ENCODE measurements at regions of chr6 and their contacts with region 1.

Region 1: GRCh38 chr6:70706491-70707123 is 38.9 kb downstream of the SMAP1 start:
- DNase-seq: no peak
- H3K4me3 Mint-ChIP-seq: no peak overlapping the region
- H3K27ac Mint-ChIP-seq: no peak overlapping the region
- H3K4me1 Mint-ChIP-seq: peaks cover 41% of the 10 kb centered on the region
- H3K27me3 Mint-ChIP-seq: no peaks in the 10 kb centered on the region

Region 2: DNA sequence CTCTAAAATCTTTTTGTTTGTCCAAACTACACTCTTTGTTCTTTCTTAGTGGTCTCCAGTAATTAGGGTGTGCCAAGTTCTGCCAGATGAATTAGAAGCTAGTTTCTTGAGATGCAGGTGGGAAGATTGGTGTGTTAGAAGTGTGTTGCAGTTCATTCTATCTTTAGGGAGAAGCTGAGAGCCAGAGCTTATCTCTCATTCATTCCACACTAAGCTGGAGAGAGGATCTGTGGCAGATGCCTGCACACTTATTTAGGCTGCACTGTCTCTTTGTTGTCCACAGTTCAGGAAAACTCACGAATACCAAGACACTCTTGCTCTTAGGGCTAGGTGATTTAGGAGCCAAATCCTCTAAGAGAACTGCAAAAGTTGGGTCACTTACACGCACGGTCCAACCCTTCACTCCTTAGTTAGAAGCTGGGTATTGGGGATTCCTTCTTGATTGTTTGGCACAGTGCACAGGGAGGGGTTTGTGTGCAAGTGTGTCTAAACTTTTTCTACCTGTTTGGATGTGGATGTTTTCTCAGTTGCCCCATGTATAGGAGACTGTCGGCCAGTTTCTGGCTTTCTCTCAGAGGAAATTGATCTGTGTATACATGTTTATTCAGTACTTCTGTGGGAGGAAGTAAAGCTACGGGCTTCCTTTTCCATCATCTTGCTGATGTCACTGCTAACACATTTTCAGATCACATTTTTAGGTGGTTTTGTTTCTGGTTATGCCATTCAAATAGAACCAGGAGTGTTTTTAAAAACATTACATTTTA is 10.6 kb after region 1 on chr6:
- CTCF ChIA-PET with region 1: interaction called, 11 read pairs
- intact Hi-C with region 1: no loop called
- DNase-seq: peak; percentile 22
- H3K4me3 Mint-ChIP-seq: no peak overlapping the region
- H3K27ac Mint-ChIP-seq: peak overlapping the region; percentile 29
- H3K4me1 Mint-ChIP-seq: peaks cover 44% of the 10 kb centered on the region
- H3K27me3 Mint-ChIP-seq: no peaks in the 10 kb centered on the region

Region 3: DNA sequence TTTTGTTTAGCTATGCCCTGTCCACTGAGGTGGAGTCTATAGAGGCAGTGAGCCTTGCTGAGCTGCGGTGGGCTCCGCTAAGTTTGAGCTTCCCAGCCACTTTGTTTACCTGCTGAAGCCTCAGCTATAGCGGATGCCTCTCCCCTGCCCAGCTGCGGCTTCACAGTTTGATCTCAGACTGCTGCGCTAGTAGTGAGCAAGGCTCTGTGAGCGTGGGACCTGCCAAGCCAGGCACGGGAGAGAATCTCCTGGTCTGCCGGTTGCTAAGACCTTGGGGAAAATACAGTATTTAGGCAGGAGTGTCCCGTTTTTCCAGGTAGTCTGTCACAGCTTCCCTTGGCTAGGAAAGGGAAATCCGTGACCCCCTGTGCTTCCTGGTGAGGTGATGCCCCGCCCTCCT is 99.5 kb after region 1 on chr6:
- CTCF ChIA-PET with region 1: interaction called, 11 read pairs
- intact Hi-C with region 1: no loop called
- DNase-seq: no peak
- H3K4me3 Mint-ChIP-seq: no peak overlapping the region
- H3K27ac Mint-ChIP-seq: no peak overlapping the region
- H3K4me1 Mint-ChIP-seq: peaks cover 10% of the 10 kb centered on the region
- H3K27me3 Mint-ChIP-seq: no peaks in the 10 kb centered on the region

Region 4: DNA sequence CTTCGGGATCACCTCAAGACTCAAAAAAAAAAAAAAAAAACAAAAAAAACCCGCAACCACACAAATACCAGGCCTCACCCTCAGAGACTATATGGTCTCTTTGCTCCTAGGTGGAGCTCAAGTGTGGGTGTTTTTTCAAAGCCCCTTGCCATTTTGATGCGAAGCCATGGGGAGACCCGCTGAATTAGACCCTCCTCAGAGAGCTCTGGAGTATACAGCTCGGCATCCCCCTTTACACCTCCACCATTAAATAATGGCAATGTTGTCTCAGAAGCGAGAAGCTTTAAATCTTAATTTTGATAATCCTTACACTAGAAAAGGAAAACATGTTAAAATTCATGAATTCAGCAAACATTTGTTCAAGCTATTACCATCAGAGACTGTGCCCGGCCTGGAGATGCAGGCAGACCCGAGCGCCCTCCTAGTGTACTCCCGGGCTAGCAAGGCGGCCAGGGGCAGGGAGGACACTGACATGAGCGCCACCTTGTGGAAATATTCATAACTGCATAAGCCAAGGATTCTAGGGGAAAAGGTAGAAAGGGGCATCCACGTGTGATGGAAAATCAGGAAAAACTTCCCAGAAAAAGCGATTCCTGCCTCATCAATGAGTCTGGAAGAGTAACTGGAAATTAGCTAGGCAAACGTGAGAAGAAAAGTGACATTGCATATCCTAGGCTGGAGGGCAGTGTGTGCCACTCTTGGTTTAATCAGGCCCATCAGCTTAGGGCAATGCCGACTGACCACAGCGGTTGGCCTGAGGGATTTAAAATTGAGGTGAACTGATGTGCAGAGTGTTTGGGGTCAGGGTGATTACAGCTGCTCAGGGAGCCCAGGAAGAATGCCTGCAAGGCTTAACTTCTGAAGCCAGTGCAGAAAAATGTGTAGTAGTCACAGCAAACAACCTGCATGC is 177.7 kb after region 1 on chr6:
- CTCF ChIA-PET with region 1: interaction called, 95 read pairs
- intact Hi-C with region 1: loop called (anchors 1 kb)
- DNase-seq: peak; percentile 70
- H3K4me3 Mint-ChIP-seq: no peak overlapping the region
- H3K27ac Mint-ChIP-seq: no peak overlapping the region
- H3K4me1 Mint-ChIP-seq: no peaks in the 10 kb centered on the region
- H3K27me3 Mint-ChIP-seq: peaks cover 4% of the 10 kb centered on the region

Region 5: GRCh38 chr6:71288228-71289001 is 581.8 kb after region 1 on chr6 and contains the start of gene OGFRL1:
- CTCF ChIA-PET with region 1: no interaction called
- intact Hi-C with region 1: loop called (anchors 10 kb)
- DNase-seq: peak; percentile 63
- H3K4me3 Mint-ChIP-seq: peak within 1 kb of the TSS; percentile 72
- H3K27ac Mint-ChIP-seq: peak within 1 kb of the TSS; percentile 31
- H3K4me1 Mint-ChIP-seq: peaks cover 22% of the 10 kb centered on the region
- H3K27me3 Mint-ChIP-seq: peaks cover 7% of the 10 kb centered on the region
- total RNA-seq, gene OGFRL1: 2.6 to 3.1 TPM

Measured in activated naive CD4-positive, alpha-beta T cell treated with anti-CD3 and anti-CD28 coated beads for 36 hours (primary cell).